Aorta (tissue), 5 donors: ENCODE measurements at regions of chr4 and their contacts with region 1.

Region 1: GRCh38 chr4:67327262-67328017 is 217.9 kb downstream of the CENPC start:
- DNase-seq: no peak
- ATAC-seq: no peak
- H3K4me3 ChIP-seq: no peak overlapping the region
- H3K27ac ChIP-seq: no peak overlapping the region
- H3K4me1 ChIP-seq: no peaks in the 10 kb centered on the region
- H3K27me3 ChIP-seq: no peaks in the 10 kb centered on the region

Region 2: DNA sequence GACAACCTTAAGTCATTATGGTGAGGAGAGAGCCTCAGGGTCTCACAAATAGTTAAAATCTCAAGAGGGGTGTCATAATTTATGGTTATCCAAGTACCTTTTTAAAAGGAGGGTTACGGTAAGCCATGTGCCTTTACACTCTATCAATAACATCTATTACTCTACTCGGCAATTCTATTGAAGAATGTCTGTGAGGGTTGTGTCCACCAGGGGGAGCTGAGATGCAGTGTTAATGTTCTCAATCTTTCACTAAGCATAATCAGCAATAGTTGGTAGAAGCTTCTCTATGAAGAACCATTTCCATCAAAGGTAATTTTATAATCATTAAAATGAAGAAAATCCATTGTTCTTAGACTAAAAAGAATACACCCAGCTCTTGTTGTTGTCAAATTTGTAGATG is 239.5 kb before region 1 on chr4:
- intact Hi-C with region 1: loop called in 1 of 2 experiments (anchors 5 kb)
- DNase-seq: peak in 1 of 2 donors; percentile 43
- ATAC-seq: no peak
- H3K4me3 ChIP-seq: no peak overlapping the region
- H3K27ac ChIP-seq: no peak overlapping the region
- H3K4me1 ChIP-seq: no peaks in the 10 kb centered on the region
- H3K27me3 ChIP-seq: no peaks in the 10 kb centered on the region

Region 3: GRCh38 chr4:67234296-67234695 is 93.1 kb before region 1 on chr4:
- intact Hi-C with region 1: no loop called
- DNase-seq: no peak
- ATAC-seq: no peak
- H3K4me3 ChIP-seq: no peak overlapping the region
- H3K27ac ChIP-seq: no peak overlapping the region
- H3K4me1 ChIP-seq: no peaks in the 10 kb centered on the region
- H3K27me3 ChIP-seq: no peaks in the 10 kb centered on the region

Region 4: DNA sequence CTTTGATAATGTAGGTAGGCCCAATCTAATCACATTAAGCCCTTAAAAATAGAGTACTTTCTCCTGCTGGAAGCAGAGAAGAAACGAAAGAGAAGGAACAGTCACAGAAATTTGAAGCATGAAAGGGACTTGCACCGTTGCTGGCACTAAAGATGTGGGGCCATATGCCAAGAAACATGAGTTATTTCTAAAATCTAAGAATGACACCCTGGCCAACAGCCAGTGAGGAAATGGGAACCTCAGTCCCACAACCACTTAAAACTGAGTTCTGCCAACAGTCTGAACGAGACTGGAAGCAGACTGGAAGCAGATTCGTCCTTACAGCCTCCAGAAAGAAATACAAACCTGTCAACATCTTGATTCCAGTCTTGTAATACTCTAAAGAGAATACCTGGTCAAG is 147.7 kb after region 1 on chr4:
- intact Hi-C with region 1: no loop called
- DNase-seq: peak in 1 of 2 donors; percentile 59
- ATAC-seq: no peak
- H3K4me3 ChIP-seq: no peak overlapping the region
- H3K27ac ChIP-seq: no peak overlapping the region
- H3K4me1 ChIP-seq: no peaks in the 10 kb centered on the region
- H3K27me3 ChIP-seq: no peaks in the 10 kb centered on the region

Region 5: GRCh38 chr4:67885762-67886161 is 558.3 kb after region 1 on chr4:
- intact Hi-C with region 1: no loop called
- DNase-seq: no peak
- ATAC-seq: no peak
- H3K4me3 ChIP-seq: no peak overlapping the region
- H3K27ac ChIP-seq: no peak overlapping the region
- H3K4me1 ChIP-seq: no peaks in the 10 kb centered on the region
- H3K27me3 ChIP-seq: no peaks in the 10 kb centered on the region

Region 6: DNA sequence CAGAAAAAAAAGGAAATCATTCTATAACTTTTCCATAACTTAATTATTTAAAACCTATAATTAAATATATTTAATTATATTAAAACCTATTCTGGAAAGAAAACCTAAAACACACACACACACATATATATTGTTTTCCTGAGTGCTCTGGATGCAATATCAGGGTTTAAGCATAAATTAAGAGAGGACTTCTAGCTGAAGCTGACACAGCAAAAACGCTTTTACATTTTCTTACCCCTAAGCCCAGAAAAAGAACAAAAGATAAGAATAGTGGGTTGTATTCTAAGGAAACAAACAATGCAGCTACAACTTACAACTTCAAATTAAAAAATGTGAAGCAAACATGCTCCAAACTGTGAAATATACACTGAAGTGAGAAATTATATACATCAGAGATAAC is 865.8 kb after region 1 on chr4:
- intact Hi-C with region 1: no loop called
- DNase-seq: no peak
- ATAC-seq: no peak
- H3K4me3 ChIP-seq: no peak overlapping the region
- H3K27ac ChIP-seq: no peak overlapping the region
- H3K4me1 ChIP-seq: no peaks in the 10 kb centered on the region
- H3K27me3 ChIP-seq: no peaks in the 10 kb centered on the region